ENCODE measurements at regions of chr4 and their contacts with region 1.

Region 1: DNA sequence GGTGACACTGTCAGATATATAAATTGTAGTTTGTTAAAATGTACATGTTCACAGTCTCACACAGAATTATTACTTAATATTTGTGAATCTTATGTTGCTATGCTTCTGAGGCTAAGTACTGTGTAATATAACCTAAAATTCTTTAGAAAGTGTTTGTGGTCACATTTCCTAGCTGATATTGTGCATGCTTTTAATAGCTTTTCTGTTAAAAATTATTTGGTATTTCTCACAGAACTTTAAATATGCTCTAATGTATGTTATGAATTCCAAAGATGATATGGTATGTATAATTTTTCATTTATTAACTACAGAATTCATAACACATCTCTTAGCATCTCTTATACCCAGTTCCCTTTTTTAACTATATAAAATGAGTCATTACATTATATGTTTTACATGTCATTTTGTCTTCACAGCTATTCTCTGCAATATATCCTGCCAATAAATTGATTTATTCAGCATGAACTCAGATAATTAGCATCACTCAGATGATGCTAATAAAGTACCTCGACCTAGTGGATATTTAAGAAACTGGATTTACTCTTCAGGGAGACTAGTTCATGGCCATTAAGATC is 9.3 kb downstream of the PTPN13 start:
- DNase-seq: no peak
- H3K4me3 Mint-ChIP-seq: no peak overlapping the region
- H3K27ac Mint-ChIP-seq: no peak overlapping the region
- H3K4me1 Mint-ChIP-seq: peaks cover 12% of the 10 kb centered on the region
- H3K27me3 Mint-ChIP-seq: no peaks in the 10 kb centered on the region
- CTCF ChIP-seq: no peak

Region 2: GRCh38 chr4:86482311-86483172 is 120.9 kb before region 1 on chr4:
- CTCF ChIA-PET with region 1: no interaction called
- intact Hi-C with region 1: no loop called
- DNase-seq: no peak
- H3K4me3 Mint-ChIP-seq: no peak overlapping the region
- H3K27ac Mint-ChIP-seq: no peak overlapping the region
- H3K4me1 Mint-ChIP-seq: no peaks in the 10 kb centered on the region
- H3K27me3 Mint-ChIP-seq: no peaks in the 10 kb centered on the region
- CTCF ChIP-seq: no peak

Region 3: DNA sequence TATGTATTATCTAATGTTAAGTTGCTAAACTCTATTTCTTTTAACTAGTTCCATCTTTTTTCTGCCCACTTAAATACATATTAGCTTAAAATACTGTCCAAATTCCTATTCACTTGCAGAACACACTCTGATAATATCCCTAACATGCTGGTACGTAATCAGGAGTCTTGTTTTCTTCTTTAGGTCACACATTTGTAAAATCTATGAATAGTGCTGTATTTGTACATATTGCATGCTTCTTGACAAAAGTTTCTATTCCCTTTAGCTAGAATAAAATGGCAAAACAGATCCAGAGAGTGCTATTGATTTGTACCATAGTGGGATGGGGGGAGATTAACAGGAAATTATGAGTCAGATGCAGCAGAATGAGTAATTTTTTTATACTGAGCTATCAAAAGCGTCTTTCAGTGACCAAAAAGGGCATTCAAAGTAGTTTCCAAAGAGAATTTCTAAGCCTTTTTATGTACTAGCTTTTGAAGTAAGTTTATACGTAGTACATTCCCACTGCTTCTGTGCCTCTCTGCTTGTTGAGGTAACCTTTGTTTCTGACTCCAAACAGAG is 117.2 kb after region 1 on chr4:
- CTCF ChIA-PET with region 1: interaction called, 5 read pairs
- intact Hi-C with region 1: loop called (anchors 5 kb)
- DNase-seq: peak; percentile 6
- H3K4me3 Mint-ChIP-seq: peak overlapping the region; percentile 30
- H3K27ac Mint-ChIP-seq: peak overlapping the region; percentile 91
- H3K4me1 Mint-ChIP-seq: peaks cover 25% of the 10 kb centered on the region
- H3K27me3 Mint-ChIP-seq: no peaks in the 10 kb centered on the region
- CTCF ChIP-seq: no peak